ENCODE measurements at regions of chr1 and their contacts with region 1.

Region 1: DNA sequence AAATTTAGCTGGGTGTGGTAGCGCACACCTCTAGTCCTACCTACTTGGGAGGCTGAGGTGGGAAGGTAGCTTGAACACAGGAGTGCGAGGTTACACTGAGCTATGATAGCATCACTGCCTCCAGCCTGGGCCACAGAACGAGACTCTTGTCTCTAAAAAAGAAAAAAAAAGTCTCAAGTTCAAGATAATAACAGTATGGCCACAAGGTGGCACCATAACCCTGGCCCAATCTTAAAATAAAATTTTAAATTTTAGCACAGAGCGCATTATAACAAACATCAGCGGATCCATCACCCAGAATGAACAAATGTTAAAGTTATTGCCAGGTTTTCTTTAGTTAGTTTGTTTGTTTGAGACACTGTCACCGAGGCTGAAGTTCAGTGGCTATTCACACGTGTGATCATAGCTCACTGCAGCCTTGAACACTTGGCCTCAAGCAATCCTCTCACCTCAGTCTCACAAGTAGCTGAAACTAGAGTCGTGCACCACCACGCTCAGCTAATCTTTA is 2.9 kb upstream of the HTR6 start:
- DNase-seq: peak; percentile 69
- ATAC-seq: no peak
- H3K4me3 Mint-ChIP-seq: no peak overlapping the region
- H3K27ac Mint-ChIP-seq: no peak overlapping the region
- H3K4me1 Mint-ChIP-seq: peaks cover 26% of the 10 kb centered on the region
- H3K27me3 Mint-ChIP-seq: peaks cover 17% of the 10 kb centered on the region

Region 2: GRCh38 chr1:19251305-19252196 is 410.2 kb before region 1 on chr1 and contains the starts of genes EMC1 and MRTO4:
- CTCF ChIA-PET with region 1: interaction called, 3 read pairs
- POLR2A ChIA-PET with region 1: no interaction called
- intact Hi-C with region 1: loop called (anchors 1 to 10 kb)
- DNase-seq: peak; percentile 94
- ATAC-seq: peak; percentile 87
- H3K4me3 Mint-ChIP-seq: peak within 1 kb of the TSS; percentile 99
- H3K27ac Mint-ChIP-seq: peak within 1 kb of the TSS; percentile 96
- H3K4me1 Mint-ChIP-seq: peaks cover 45% of the 10 kb centered on the region
- H3K27me3 Mint-ChIP-seq: no peaks in the 10 kb centered on the region
- total RNA-seq, gene EMC1: 45.0 to 59.0 TPM
- total RNA-seq, gene MRTO4: 82.6 to 95.0 TPM

Region 3: DNA sequence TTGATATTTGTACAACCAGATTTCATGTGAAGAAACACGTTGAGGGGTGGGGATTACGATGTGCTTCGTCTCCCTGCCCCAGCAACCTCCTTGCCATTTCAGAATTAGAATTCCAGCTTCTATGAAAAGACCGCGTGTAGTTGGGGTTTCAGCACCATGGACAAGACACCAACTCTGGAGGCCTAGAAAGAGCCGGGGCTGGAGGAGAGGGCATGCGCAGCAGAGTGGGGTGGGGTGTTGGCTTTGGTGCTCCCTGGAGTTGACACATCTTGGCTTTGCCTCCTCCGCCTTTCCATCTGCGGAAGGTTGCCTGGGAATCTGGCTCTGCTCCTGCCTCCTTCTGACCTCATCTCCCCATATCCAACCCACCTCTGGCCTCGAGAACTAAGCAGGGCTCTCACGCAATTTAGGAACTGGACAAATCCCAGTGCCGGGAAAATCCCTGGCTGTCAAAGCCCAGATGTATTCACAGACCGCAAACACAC is 14.7 kb after region 1 on chr1:
- CTCF ChIA-PET with region 1: interaction called, 20 read pairs
- POLR2A ChIA-PET with region 1: no interaction called
- intact Hi-C with region 1: no loop called
- DNase-seq: peak; percentile 47
- ATAC-seq: no peak
- H3K4me3 Mint-ChIP-seq: no peak overlapping the region
- H3K27ac Mint-ChIP-seq: no peak overlapping the region
- H3K4me1 Mint-ChIP-seq: no peaks in the 10 kb centered on the region
- H3K27me3 Mint-ChIP-seq: no peaks in the 10 kb centered on the region

Region 4: DNA sequence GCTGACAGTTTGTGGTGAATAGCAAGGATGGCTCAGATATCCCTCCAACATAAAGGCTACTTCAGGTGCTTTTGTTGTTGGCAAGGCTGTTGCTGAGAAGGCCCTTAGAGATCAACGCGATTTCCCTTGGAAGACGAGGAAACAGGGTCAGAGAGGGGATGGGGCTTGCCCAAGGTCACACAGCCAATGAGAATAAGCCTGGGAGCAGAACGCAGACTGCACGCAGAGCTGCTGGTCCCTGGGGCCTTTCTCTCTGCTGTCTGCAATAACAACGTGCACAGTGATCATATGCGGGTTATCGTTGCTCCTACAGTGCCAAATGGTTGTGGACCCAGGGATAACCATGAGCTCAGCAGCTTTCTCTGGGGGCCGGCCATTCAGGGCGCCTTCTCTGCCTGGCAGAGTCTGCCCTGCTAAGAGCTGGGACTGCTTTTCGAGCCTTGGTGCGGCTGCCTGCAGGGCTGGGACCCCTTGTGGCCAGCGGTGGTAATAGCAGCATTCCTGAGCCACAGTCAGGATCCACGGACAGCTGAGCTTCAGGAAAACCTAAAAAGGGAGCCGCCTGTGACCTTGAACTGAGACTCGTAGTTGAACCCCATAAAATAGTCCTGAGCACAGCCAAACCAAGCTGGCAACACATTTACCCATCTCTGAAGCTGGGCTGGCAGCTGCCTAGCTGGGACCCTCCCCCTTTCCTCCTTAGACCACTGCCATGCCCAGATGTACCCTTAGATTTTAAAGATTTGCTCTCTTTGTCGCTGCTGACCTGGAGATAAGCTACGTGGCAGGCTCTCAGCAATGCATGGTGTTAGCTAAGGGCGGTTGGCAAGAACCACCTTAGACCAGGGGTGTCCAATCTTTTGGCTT is 42.7 kb after region 1 on chr1:
- CTCF ChIA-PET with region 1: interaction called, 151 read pairs
- POLR2A ChIA-PET with region 1: no interaction called
- intact Hi-C with region 1: loop called (anchors 1 kb)
- DNase-seq: peak; percentile 77
- ATAC-seq: peak; percentile 75
- H3K4me3 Mint-ChIP-seq: no peak overlapping the region
- H3K27ac Mint-ChIP-seq: no peak overlapping the region
- H3K4me1 Mint-ChIP-seq: peaks cover 18% of the 10 kb centered on the region
- H3K27me3 Mint-ChIP-seq: no peaks in the 10 kb centered on the region

Region 5: DNA sequence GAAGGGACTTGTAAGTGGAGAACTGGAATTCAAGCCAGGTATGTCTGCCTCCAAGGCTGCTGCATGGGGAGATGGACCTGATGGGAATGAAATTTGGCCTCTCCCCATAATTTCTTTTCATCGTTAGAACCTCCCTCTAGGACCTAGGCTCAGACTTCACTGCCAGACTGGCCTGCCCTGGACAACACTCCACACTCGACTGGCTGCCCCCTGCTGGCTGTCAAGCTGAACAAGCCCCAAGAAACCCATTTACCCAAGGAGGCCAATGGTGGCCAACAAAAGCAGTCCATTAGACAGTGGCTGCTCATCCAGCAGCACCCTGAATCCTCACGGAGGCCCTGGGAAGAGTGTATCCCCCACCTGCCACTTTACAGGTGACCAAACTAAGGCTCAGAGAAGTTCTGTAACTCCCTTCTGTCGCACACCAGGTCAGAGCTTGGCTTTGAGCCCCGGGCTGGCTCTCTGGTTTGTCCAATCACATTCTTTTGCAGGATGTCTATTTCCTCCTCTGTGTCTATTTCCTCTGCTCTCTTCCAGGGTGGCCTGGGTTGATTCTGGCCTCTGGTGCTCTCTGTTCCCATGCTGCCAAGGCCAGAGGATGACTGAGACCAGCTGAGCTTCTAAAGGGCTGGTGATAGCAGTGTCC is 149.6 kb after region 1 on chr1:
- CTCF ChIA-PET with region 1: interaction called, 9 read pairs
- POLR2A ChIA-PET with region 1: no interaction called
- intact Hi-C with region 1: loop called (anchors 1 kb)
- DNase-seq: peak; percentile 81
- ATAC-seq: peak; percentile 85
- H3K4me3 Mint-ChIP-seq: no peak overlapping the region
- H3K27ac Mint-ChIP-seq: no peak overlapping the region
- H3K4me1 Mint-ChIP-seq: no peaks in the 10 kb centered on the region
- H3K27me3 Mint-ChIP-seq: no peaks in the 10 kb centered on the region

Region 6: DNA sequence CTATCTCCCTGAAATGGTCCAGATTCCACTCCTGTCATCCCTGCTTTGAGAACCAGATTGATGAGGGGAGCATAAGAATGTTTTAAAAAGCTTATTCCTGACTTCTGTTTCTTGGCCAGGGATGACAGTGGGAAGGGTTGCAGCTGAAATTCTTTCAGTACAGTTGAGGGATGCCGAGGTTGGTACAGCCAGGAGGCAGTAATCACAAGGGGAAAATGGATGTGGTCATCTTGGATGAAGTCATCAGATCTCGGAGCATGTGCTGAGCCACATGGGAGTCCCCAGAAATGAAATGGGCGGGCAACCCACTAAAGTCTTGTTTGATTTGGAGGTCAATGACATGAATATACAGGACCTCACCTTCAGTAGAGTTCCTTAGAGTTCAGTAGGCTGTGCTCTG is 280.3 kb after region 1 on chr1:
- CTCF ChIA-PET with region 1: no interaction called
- POLR2A ChIA-PET with region 1: no interaction called
- intact Hi-C with region 1: no loop called
- DNase-seq: no peak
- ATAC-seq: no peak
- H3K4me3 Mint-ChIP-seq: no peak overlapping the region
- H3K27ac Mint-ChIP-seq: no peak overlapping the region
- H3K4me1 Mint-ChIP-seq: no peaks in the 10 kb centered on the region
- H3K27me3 Mint-ChIP-seq: peaks cover 10% of the 10 kb centered on the region

Region 7: DNA sequence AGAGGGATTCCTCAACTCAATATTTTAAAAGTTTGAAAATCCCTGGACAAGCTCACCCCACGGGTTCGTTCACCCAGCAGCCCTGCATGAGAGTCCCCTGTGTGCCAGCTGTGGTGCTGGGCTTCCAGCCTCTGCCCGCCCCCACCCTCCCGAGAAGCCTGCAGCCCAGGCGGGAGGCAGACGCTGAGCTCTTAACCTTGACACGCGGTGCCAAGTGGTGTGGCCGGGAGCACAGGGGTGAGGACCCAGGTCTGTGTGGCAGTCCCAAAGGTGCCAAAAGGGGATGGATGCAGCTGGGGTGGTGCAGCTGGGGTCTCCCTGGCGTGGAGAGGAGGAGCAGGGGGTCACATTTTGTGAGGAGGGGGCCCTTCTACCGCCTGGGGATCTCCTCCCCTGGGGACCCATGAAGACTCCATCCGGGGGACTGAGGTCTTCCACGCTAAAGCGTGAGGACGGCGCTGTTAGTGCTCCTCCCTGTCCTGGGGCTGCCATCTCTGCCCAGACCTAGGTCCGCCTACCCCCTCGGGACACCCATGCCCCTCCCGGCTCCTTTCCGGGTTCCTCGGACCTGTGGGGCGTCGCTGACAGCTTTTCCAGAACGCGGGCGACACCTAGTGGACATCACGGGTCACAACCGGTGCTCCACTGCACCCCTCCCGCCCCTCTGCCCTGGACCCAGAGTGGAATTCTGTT is 490.3 kb after region 1 on chr1:
- CTCF ChIA-PET with region 1: interaction called, 5 read pairs
- POLR2A ChIA-PET with region 1: no interaction called
- intact Hi-C with region 1: loop called in 1 of 2 experiments (anchors 2 kb)
- DNase-seq: peak; percentile 88
- ATAC-seq: peak; percentile 97
- H3K4me3 Mint-ChIP-seq: peak overlapping the region; percentile 48
- H3K27ac Mint-ChIP-seq: no peak overlapping the region
- H3K4me1 Mint-ChIP-seq: peaks cover 9% of the 10 kb centered on the region
- H3K27me3 Mint-ChIP-seq: no peaks in the 10 kb centered on the region

Region 8: DNA sequence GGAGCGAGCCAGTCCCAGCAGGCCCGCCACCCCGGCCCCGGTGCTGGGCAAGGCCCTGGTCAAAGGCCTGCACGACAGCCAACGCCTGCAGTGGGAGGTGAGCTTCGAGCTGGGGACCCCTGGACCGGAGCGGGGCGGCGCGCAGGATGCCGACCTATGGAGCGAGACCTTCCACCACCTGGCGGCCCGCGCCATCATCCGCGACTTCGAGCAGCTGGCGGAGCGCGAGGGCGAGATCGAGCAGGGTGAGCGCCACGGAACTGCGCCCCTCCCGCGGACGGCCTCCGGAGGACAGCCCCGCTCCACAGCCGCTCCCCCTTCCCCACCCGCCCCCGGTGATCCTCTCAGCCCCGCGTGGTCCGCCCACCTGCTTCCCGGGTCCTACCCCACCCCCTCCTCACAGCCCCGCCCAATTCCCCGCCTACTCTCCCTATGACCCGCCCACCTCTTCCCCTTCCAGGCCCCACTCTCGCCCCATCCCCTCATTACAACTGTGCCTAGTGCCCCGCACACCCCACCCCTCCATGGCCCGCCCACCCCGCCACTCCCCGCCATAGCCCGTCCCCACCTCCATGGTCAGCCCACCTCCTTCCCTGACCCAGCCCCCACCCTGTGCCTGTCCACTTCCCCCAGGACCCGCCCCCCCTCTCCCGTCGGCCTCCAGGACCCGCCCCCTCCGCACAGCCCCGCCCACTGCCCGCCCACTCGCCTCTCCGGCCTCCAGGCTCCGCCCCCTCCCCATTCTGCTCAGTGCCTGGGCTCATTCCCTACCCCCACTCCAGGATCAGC is 681.6 kb after region 1 on chr1:
- CTCF ChIA-PET with region 1: no interaction called
- POLR2A ChIA-PET with region 1: no interaction called
- intact Hi-C with region 1: no loop called
- DNase-seq: peak; percentile 63
- ATAC-seq: peak; percentile 42
- H3K4me3 Mint-ChIP-seq: no peak overlapping the region
- H3K27ac Mint-ChIP-seq: no peak overlapping the region
- H3K4me1 Mint-ChIP-seq: peaks cover 5% of the 10 kb centered on the region
- H3K27me3 Mint-ChIP-seq: peaks cover 34% of the 10 kb centered on the region

Region 9: DNA sequence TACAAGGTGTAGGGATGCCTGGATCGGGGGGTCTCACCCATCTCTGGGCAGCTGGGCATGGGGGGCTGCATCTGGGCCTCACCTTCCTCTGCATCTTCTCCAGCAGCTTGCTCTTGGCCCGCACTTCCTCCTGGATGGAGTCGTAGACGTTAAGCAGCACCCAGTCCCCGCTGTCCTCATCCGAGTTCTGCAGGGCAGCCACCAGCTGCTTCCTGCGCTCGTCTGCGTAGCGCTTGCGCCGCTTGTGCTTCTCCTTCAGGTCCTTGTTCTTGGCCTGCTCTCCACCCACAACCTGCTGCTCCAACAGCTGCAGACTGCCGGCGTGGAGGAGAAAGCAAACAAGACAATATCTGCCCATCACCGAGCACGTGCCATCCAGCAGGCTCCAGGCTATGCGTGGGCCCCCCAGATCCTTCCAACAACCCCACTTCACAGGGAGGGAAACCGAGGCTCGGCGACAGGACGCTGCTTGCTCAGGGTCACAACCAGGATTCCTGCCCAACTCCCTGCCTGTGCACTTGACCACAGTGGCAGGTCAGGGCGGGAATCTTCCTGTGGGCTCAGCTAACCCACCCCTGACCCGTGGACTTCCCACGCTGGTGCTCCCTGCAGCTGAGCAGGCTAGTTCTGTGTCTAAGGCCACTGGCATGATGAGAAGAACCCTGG is 1020.9 kb after region 1 on chr1:
- CTCF ChIA-PET with region 1: no interaction called
- POLR2A ChIA-PET with region 1: no interaction called
- intact Hi-C with region 1: no loop called
- DNase-seq: no peak
- ATAC-seq: no peak
- H3K4me3 Mint-ChIP-seq: no peak overlapping the region
- H3K27ac Mint-ChIP-seq: no peak overlapping the region
- H3K4me1 Mint-ChIP-seq: peaks cover 5% of the 10 kb centered on the region
- H3K27me3 Mint-ChIP-seq: peaks cover 9% of the 10 kb centered on the region

Measured in activated CD4-positive, alpha-beta T cell treated with anti-CD3 and anti-CD28 coated beads for 36 hours (primary cell).